ENCODE measurements at regions of chr6 and their contacts with region 1.

Region 1: GRCh38 chr6:159233365-159234101 is 64.3 kb downstream of the FNDC1 start:
- DNase-seq: no peak

Region 2: GRCh38 chr6:159203304-159204005 is 30.1 kb before region 1 on chr6:
- intact Hi-C with region 1: loop called in 1 of 2 experiments (anchors 1 kb)
- DNase-seq: no peak